ENCODE measurements at regions of chr7 and their contacts with region 1.

Region 1: DNA sequence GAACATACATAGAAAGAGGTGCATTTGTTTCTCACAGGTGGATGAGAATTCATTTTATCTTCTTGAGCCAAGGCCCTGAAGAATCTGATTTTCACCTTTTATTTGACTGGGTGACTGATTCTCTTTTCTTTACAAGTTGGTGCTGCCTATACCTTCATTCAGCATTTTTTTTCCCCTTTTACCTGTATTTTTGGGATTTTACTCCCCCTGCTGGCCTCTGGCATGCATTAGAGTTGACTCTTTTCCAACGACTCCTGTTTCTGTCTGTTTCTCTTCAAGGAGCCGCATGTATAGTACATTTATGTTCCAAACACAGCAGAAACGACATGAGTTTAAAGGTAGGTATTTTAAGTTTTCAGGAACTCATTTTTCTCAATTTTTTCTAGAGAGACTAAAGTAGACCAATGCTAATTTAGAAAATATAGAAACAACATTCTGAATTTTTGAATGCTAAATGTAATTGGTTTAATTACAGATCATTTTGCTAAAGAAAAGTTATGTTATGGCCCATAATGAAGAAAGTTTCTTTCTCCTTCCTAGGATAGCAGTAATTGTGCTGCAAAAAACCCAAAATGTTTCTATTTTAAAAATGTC is 149.8 kb upstream of the HDAC9 start:
- DNase-seq: peak in 5 of 14 experiments; percentile 1 to 59 (median 43)
- ATAC-seq: peak; percentile 34
- H3K4me3 ChIP-seq: no peak overlapping the region
- H3K4me3 Mint-ChIP-seq: no peak overlapping the region
- H3K27ac ChIP-seq: no peak overlapping the region
- H3K27ac Mint-ChIP-seq: no peak overlapping the region
- H3K4me1 ChIP-seq: no peaks in the 10 kb centered on the region
- H3K4me1 Mint-ChIP-seq: no peaks in the 10 kb centered on the region
- H3K27me3 ChIP-seq: no peaks in the 10 kb centered on the region
- H3K27me3 Mint-ChIP-seq: peaks cover 10% of the 10 kb centered on the region
- CTCF ChIP-seq: peak; percentile 63

Region 2: GRCh38 chr7:17706734-17707133 is 639.0 kb before region 1 on chr7:
- CTCF ChIA-PET with region 1: no interaction called
- POLR2A ChIA-PET with region 1: no interaction called
- intact Hi-C with region 1: loop called in 1 of 2 experiments (anchors 1 kb)
- DNase-seq: peak in 6 of 14 experiments; percentile 6 to 66 (median 19)
- ATAC-seq: no peak
- H3K4me3 ChIP-seq: no peak overlapping the region
- H3K4me3 Mint-ChIP-seq: no peak overlapping the region
- H3K27ac ChIP-seq: no peak overlapping the region
- H3K27ac Mint-ChIP-seq: no peak overlapping the region
- H3K4me1 ChIP-seq: no peaks in the 10 kb centered on the region
- H3K4me1 Mint-ChIP-seq: no peaks in the 10 kb centered on the region
- H3K27me3 ChIP-seq: peaks cover 0 to 4% of the 10 kb centered on the region in 2 experiments
- H3K27me3 Mint-ChIP-seq: peaks cover 8% of the 10 kb centered on the region
- CTCF ChIP-seq: peak; percentile 36

Region 3: GRCh38 chr7:17769918-17770317 is 575.8 kb before region 1 on chr7:
- CTCF ChIA-PET with region 1: interaction called, 5 read pairs
- POLR2A ChIA-PET with region 1: no interaction called
- intact Hi-C with region 1: loop called in 1 of 2 experiments (anchors 2 kb)
- DNase-seq: peak in 13 of 14 experiments; percentile 6 to 67 (median 23)
- ATAC-seq: no peak
- H3K4me3 ChIP-seq: no peak overlapping the region
- H3K4me3 Mint-ChIP-seq: no peak overlapping the region
- H3K27ac ChIP-seq: no peak overlapping the region
- H3K27ac Mint-ChIP-seq: no peak overlapping the region
- H3K4me1 ChIP-seq: no peaks in the 10 kb centered on the region
- H3K4me1 Mint-ChIP-seq: no peaks in the 10 kb centered on the region
- H3K27me3 ChIP-seq: no peaks in the 10 kb centered on the region
- H3K27me3 Mint-ChIP-seq: no peaks in the 10 kb centered on the region
- CTCF ChIP-seq: peak; percentile 67

Measured in CD4-positive, alpha-beta T cell (primary cell).